ENCODE measurements at regions of chr22 and their contacts with region 1.

Region 1: GRCh38 chr22:17974703-17975372 is 49.5 kb downstream of the MICAL3 start:
- DNase-seq: no peak
- ATAC-seq: peak; percentile 32
- H3K4me3 Mint-ChIP-seq: peak overlapping the region; percentile 50
- H3K27ac Mint-ChIP-seq: peak overlapping the region; percentile 59
- H3K4me1 Mint-ChIP-seq: peaks cover 87% of the 10 kb centered on the region
- H3K27me3 Mint-ChIP-seq: no peaks in the 10 kb centered on the region
- CTCF ChIP-seq: no peak

Region 2: GRCh38 chr22:17964643-17965042 is 10.2 kb before region 1 on chr22:
- CTCF ChIA-PET with region 1: interaction called, 3 read pairs
- POLR2A ChIA-PET with region 1: interaction called, 6 read pairs
- intact Hi-C with region 1: loop called (anchors 1 kb)
- DNase-seq: peak; percentile 37
- ATAC-seq: peak; percentile 89
- H3K4me3 Mint-ChIP-seq: peak overlapping the region; percentile 56
- H3K27ac Mint-ChIP-seq: peak overlapping the region; percentile 88
- H3K4me1 Mint-ChIP-seq: peaks cover 84% of the 10 kb centered on the region
- H3K27me3 Mint-ChIP-seq: no peaks in the 10 kb centered on the region
- CTCF ChIP-seq: no peak

Region 3: DNA sequence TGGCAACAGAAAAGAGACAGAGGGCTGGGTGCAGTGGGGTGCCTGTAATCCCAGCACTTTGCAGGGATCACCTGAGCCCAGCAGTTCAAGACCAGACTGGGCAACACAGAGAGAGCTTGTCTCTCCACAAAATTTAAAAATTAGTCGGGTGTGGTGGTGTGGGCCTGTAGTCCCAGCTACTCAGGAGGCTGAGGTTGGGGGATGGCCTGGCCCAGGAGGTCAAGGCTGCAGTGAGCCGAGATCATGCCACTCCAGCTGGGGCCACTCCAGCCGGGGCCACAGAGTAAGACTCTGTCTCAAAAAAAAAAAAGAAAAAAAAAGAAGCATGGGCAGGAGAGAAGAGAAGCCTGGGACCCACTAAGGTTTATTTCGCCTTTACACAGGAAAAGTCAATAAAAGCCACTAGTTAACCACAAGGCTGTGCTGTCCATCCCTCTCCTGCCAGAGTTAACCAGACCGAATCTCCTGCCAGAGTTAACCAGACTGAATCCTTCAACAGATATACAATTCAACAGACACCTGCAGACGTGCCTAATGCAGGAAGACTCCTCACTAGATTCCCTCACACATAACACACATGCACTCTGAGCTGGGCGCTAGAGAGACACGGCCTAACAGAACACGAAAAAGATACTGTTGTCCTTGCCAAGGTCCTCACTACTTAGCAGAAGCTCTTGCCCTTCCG is 19.7 kb after region 1 on chr22:
- CTCF ChIA-PET with region 1: interaction called, 3 read pairs
- POLR2A ChIA-PET with region 1: interaction called, 17 read pairs
- intact Hi-C with region 1: loop called (anchors 2 kb)
- DNase-seq: no peak
- ATAC-seq: peak; percentile 10
- H3K4me3 Mint-ChIP-seq: peak overlapping the region; percentile 63
- H3K27ac Mint-ChIP-seq: peak overlapping the region; percentile 94
- H3K4me1 Mint-ChIP-seq: peaks cover 98% of the 10 kb centered on the region
- H3K27me3 Mint-ChIP-seq: no peaks in the 10 kb centered on the region
- CTCF ChIP-seq: no peak

Region 4: GRCh38 chr22:18012531-18012930 is 37.7 kb after region 1 on chr22:
- CTCF ChIA-PET with region 1: no interaction called
- POLR2A ChIA-PET with region 1: interaction called, 17 read pairs
- intact Hi-C with region 1: no loop called
- DNase-seq: no peak
- ATAC-seq: no peak
- H3K4me3 Mint-ChIP-seq: no peak overlapping the region
- H3K27ac Mint-ChIP-seq: no peak overlapping the region
- H3K4me1 Mint-ChIP-seq: peaks cover 47% of the 10 kb centered on the region
- H3K27me3 Mint-ChIP-seq: no peaks in the 10 kb centered on the region
- CTCF ChIP-seq: no peak

Region 5: DNA sequence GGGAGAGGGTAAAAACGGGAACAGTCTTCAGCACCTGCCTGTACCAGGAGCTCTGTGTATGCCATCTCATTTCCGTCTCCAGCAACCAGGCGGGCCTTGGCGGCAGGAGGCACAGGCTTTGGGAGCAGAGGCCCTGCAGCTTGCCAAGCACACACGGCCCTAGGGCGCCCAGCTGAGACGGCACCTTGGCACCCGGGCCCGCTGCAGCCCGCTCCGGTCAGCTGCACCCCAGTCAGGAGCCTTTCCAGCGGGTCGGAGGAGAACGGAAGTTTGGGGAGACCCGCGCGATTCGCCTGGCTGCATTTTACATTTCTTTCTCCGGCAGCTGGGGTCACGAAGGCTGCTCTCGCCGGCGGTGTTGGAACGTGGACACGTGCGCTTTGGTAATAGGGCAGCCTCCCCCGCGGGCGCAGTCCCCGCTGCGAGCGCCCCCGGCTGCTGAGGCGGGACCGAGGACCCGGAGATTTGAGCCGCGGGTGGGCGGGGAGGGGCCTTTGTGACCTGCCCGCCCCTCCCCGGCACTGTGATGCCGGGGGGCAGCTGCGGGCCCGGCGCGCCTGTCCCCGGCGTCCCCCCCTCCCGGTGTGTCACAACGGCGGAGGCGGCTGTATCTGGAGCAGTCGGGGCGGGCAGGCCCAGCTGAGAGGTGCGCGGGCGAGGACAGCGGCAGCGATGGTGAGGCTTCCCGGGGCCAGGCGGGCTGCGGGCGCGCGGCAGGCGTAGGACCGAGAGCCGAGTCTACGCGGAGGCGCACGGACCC is 135.5 kb after region 1 on chr22 and contains the start of gene TUBA8:
- CTCF ChIA-PET with region 1: no interaction called
- POLR2A ChIA-PET with region 1: no interaction called
- intact Hi-C with region 1: no loop called
- DNase-seq: no peak
- ATAC-seq: peak; percentile 55
- H3K4me3 Mint-ChIP-seq: peak within 1 kb of the TSS; percentile 59
- H3K27ac Mint-ChIP-seq: no peak within 1 kb of the TSS
- H3K4me1 Mint-ChIP-seq: peaks cover 33% of the 10 kb centered on the region
- H3K27me3 Mint-ChIP-seq: peaks cover 18% of the 10 kb centered on the region
- CTCF ChIP-seq: no peak
- total RNA-seq, gene TUBA8: 1.7 and 2.4 TPM in 2 replicates